ENCODE measurements at regions of chr13 and their contacts with region 1.

Region 1: DNA sequence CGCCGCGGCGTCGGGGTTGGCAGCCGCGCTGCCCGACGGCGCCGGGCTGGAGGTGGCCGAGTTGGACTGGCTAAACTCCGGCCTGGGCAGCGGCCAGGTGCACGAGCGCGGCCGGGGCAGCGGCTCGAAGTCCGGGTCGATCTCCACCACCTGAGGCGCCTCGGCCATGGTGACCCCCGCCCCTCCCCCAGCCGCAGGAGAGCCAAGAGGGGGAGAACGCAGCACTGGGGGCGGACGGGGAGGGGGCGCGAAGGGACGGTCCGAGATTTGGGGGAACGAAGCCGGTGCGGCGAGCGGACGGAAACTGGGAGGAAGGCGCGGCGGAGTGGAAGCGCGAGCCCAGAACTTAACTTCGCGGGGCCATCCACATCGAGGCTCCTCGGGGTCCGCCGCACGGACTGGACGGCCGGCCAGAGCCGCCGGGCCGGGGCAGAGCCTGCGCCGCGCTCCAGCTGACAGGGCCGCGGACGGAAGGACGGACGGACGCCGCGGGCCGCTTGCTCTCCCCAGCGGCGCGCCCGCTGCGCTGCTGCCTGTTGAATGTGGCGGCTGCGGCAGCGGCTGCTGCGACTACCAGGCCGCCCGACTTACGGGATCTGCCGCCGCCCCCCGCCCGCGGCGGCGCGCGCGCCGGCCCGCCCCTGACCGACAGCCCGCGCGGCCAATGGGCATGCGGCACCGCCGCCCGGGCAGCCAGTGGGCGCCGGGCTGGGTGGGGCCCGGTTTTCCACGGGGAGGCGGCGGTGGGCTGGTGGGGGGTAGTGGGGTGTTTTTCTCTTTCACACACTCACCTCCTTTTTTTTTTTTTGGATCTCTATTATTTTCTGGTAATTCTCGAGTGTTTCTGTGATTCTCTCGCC is at the start of gene FOXO1:
- DNase-seq: peak; percentile 85 to 96 (median 92)
- ATAC-seq: peak; percentile 72 to 78
- H3K4me3 Mint-ChIP-seq: peak within 1 kb of the TSS; percentile 89 to 98 (median 92)
- H3K27ac Mint-ChIP-seq: peak within 1 kb of the TSS; percentile 86 to 97 (median 94)
- H3K4me1 Mint-ChIP-seq: peaks cover 21 to 44% (median 39%) of the 10 kb centered on the region in 4 donors
- H3K27me3 Mint-ChIP-seq: no peaks in the 10 kb centered on the region
- polyA plus RNA-seq, gene FOXO1: 59.1 to 137 (median 86.5) TPM

Region 2: GRCh38 chr13:40206241-40207000 is 459.9 kb before region 1 on chr13:
- POLR2A ChIA-PET with region 1: interaction called, 26 read pairs
- DNase-seq: peak in 8 of 10 donors; percentile 22 to 76 (median 58)
- ATAC-seq: peak; percentile 93 to 97
- H3K4me3 Mint-ChIP-seq: peak overlapping the region; percentile 65 to 85 (median 81)
- H3K27ac Mint-ChIP-seq: peak overlapping the region; percentile 96 to 100 (median 99)
- H3K4me1 Mint-ChIP-seq: peaks cover 39 to 81% (median 77%) of the 10 kb centered on the region in 4 donors
- H3K27me3 Mint-ChIP-seq: no peaks in the 10 kb centered on the region

Region 3: GRCh38 chr13:40388617-40389016 is 277.7 kb before region 1 on chr13:
- POLR2A ChIA-PET with region 1: interaction called, 22 read pairs
- DNase-seq: peak in 9 of 10 donors; percentile 36 to 90 (median 82)
- ATAC-seq: peak; percentile 93 to 94
- H3K4me3 Mint-ChIP-seq: peak overlapping the region; percentile 84 to 95 (median 88)
- H3K27ac Mint-ChIP-seq: peak overlapping the region; percentile 96 to 100 (median 99)
- H3K4me1 Mint-ChIP-seq: peaks cover 42 to 73% (median 63%) of the 10 kb centered on the region in 4 donors
- H3K27me3 Mint-ChIP-seq: no peaks in the 10 kb centered on the region

Region 4: DNA sequence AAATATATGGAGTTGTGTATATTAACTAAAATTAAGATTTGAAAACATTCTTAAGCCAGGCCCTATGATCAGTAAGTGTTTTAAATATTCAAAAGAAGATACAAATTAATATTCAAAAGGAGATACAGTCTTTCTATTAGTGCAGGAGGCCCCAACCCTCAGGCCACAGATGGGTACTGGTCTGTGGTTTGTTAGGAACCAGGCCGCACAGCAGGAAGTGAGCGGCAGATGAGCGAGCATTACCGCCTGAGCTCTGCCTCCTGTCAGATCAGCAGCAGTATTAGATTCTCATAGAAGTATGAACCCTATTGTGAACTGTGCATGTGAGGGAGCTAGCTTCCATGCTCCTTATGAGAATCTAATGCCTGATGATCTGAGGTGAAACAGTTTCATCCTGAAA is 232.7 kb before region 1 on chr13:
- POLR2A ChIA-PET with region 1: interaction called, 12 read pairs
- DNase-seq: peak in 7 of 10 donors; percentile 6 to 40 (median 28)
- ATAC-seq: peak; percentile 59 to 70
- H3K4me3 Mint-ChIP-seq: peak overlapping the region; percentile 15 to 75 (median 62)
- H3K27ac Mint-ChIP-seq: peak overlapping the region in 9 of 10 donors; percentile 77 to 92 (median 86)
- H3K4me1 Mint-ChIP-seq: peaks cover 27 to 91% (median 65%) of the 10 kb centered on the region in 4 donors
- H3K27me3 Mint-ChIP-seq: no peaks in the 10 kb centered on the region

Region 5: GRCh38 chr13:40485611-40486517 is 180.4 kb before region 1 on chr13:
- POLR2A ChIA-PET with region 1: interaction called, 102 read pairs
- DNase-seq: peak; percentile 38 to 91 (median 78)
- ATAC-seq: peak; percentile 90 to 91
- H3K4me3 Mint-ChIP-seq: peak overlapping the region; percentile 50 to 86 (median 74)
- H3K27ac Mint-ChIP-seq: peak overlapping the region; percentile 89 to 99 (median 96)
- H3K4me1 Mint-ChIP-seq: peaks cover 56 to 95% (median 92%) of the 10 kb centered on the region in 4 donors
- H3K27me3 Mint-ChIP-seq: no peaks in the 10 kb centered on the region

Region 6: DNA sequence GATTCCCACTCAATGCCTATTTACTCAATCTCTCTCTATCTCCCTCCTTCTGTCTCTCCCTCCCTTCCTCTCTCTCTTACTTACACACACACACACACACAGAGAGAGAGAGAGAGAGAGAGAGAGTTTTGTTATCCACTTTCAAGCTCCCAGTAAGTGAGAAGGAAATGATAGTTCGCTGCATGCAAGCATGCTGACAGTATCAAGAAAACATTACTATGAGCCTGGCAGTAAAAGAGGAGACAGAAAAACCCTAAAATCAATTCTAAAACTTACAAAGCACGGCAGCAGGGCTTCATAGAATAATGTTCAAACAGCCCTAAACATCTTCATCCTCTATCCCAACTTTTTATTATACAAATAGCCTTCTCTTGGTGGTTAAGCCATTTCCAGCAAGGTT is 171.8 kb before region 1 on chr13:
- POLR2A ChIA-PET with region 1: interaction called, 102 read pairs
- DNase-seq: peak in 1 of 10 donors; percentile 55
- ATAC-seq: peak; percentile 47 to 65
- H3K4me3 Mint-ChIP-seq: peak overlapping the region; percentile 73 to 92 (median 87)
- H3K27ac Mint-ChIP-seq: peak overlapping the region; percentile 92 to 97 (median 96)
- H3K4me1 Mint-ChIP-seq: peaks cover 53 to 90% (median 90%) of the 10 kb centered on the region in 4 donors
- H3K27me3 Mint-ChIP-seq: no peaks in the 10 kb centered on the region

Region 7: DNA sequence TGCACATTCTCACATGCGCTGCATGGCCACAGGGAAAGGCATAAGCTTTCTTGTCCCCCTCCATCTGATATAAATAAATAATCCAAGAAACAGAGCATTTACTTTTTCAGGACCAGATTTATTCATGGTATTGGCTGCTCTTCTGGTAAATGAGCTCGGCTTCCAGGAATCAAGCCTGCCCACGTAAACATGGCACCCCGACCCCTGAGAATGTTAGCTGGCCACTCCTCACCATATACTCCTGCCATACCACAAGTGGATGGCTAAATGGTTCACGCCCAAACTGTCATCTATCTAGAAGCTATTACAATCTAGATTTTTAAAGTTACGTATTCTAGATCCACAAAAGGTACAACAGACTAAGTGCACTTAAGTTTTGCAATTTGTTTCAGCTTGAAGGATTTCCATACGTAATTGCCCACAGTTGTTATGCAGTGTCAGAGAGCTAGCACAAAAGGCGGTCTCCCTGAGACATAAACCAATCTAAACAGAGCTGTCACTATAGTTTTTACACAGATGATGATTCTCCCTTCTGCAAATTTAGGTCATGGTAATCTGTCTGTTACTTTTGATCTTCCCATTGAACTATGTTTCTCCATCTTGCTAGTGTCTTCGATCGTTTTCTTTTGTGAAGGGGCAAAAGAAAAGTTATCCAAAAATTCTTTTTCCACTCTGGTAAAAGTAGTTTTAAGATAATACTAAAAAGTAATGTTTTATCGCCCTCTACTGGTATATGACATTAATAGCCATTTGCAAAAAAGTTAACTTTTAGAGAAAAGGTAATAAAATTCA is 16.4 kb after region 1 on chr13:
- POLR2A ChIA-PET with region 1: interaction called, 14 read pairs
- DNase-seq: peak in 3 of 10 donors; percentile 57 to 68 (median 58)
- ATAC-seq: peak; percentile 54 to 75
- H3K4me3 Mint-ChIP-seq: peak overlapping the region in 5 of 10 donors; percentile 15 to 60 (median 32)
- H3K27ac Mint-ChIP-seq: peak overlapping the region in 5 of 10 donors; percentile 14 to 83 (median 54)
- H3K4me1 Mint-ChIP-seq: peaks cover 6 to 16% (median 12%) of the 10 kb centered on the region in 4 donors
- H3K27me3 Mint-ChIP-seq: no peaks in the 10 kb centered on the region

Region 8: GRCh38 chr13:40863723-40864122 is 197.4 kb after region 1 on chr13:
- POLR2A ChIA-PET with region 1: no interaction called
- DNase-seq: no peak
- ATAC-seq: no peak
- H3K4me3 Mint-ChIP-seq: no peak overlapping the region
- H3K27ac Mint-ChIP-seq: no peak overlapping the region
- H3K4me1 Mint-ChIP-seq: no peaks in the 10 kb centered on the region
- H3K27me3 Mint-ChIP-seq: no peaks in the 10 kb centered on the region